ENCODE measurements at regions of chr3 and their contacts with region 1.

Region 1: GRCh38 chr3:61008998-61009380 is 242.3 kb downstream of the FHIT start:
- DNase-seq: no peak
- ATAC-seq: no peak
- H3K4me3 ChIP-seq: no peak overlapping the region
- H3K27ac ChIP-seq: no peak overlapping the region
- H3K4me1 ChIP-seq: no peaks in the 10 kb centered on the region
- H3K27me3 ChIP-seq: no peaks in the 10 kb centered on the region
- CTCF ChIP-seq: no peak
- POLR2A ChIP-seq: no peak
- RAD21 ChIP-seq: no peak

Region 2: DNA sequence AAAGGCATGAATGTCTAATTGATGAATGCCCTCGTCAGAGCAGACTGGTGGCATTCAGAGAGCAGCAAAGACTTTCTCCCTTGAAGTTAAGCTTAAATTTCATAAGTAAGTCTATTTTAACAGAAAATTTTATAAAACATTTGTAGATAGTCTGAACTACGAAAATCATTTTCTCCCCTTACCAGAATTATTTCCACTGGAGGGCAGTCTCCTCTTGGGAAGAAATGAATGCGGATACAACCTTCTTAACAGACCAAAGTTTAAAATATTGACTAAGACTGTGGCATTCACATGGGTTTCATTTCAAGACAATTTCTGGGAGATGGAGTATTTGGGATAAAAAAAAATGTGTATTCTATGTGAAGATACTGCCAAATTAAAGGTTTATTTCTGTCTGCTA is 426.7 kb before region 1 on chr3:
- CTCF ChIA-PET with region 1: no interaction called
- POLR2A ChIA-PET with region 1: no interaction called
- dilution Hi-C with region 1: no loop called
- in situ Hi-C with region 1: no loop called
- intact Hi-C with region 1: no loop called
- DNase-seq: no peak
- ATAC-seq: no peak
- H3K4me3 ChIP-seq: no peak overlapping the region
- H3K27ac ChIP-seq: no peak overlapping the region
- H3K4me1 ChIP-seq: peaks cover 2% of the 10 kb centered on the region; the same call in 1 of the 2 replicates
- H3K27me3 ChIP-seq: no peaks in the 10 kb centered on the region
- CTCF ChIP-seq: peak; percentile 18; the same call in 1 of the 2 replicates
- POLR2A ChIP-seq: no peak
- RAD21 ChIP-seq: no peak

Region 3: DNA sequence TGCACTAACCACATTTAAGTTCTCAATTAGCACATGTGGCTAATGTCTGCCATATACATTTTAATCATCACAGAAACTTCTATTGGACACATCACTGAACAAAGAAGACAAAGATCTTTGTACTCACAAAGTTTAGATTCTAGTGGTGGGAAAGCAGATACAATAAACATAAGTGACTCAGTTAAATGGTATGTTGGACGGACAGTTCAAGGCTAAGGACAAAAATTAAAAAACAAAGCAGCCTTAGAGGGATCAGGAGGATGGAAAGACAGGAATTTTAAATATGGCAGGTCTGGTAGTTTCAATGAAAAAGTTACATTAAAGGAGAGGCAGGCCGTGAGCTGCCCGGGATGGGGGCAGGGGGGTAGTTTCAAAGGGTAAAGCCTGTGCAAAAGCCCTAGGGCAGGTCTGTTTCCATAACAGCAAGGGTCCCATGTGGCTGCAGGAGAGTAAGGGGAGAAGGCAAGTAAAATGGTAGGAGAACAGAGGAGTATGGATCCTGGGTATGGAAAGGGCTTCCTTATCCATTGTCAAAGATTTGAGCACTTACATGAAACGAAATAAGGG is 21.6 kb after region 1 on chr3:
- CTCF ChIA-PET with region 1: no interaction called
- POLR2A ChIA-PET with region 1: no interaction called
- dilution Hi-C with region 1: no loop called
- in situ Hi-C with region 1: no loop called
- intact Hi-C with region 1: loop called (anchors 1 kb)
- DNase-seq: no peak
- ATAC-seq: no peak
- H3K4me3 ChIP-seq: no peak overlapping the region
- H3K27ac ChIP-seq: no peak overlapping the region
- H3K4me1 ChIP-seq: no peaks in the 10 kb centered on the region
- H3K27me3 ChIP-seq: no peaks in the 10 kb centered on the region
- CTCF ChIP-seq: no peak
- POLR2A ChIP-seq: no peak
- RAD21 ChIP-seq: no peak

Region 4: DNA sequence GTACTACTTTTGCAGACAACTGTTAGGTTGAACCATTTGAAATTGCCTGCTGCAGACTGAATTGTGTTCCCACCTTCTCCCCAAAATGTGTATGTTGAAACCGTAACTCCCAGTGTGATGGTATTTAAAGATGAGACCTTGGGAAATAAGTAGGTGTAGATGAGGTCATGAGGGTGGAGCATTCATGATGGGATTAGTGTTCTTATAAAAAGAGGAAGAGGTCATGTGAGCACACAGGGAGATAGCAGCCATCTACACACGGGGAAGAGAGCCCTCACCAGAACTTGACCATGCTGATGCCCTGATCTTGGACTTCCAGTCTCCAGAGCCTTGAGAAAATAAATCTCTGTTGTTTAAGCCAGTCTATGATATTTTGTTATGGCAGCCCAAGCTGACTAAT is 259.7 kb after region 1 on chr3:
- CTCF ChIA-PET with region 1: no interaction called
- POLR2A ChIA-PET with region 1: no interaction called
- dilution Hi-C with region 1: no loop called
- in situ Hi-C with region 1: no loop called
- intact Hi-C with region 1: no loop called
- DNase-seq: no peak
- ATAC-seq: no peak
- H3K4me3 ChIP-seq: no peak overlapping the region
- H3K27ac ChIP-seq: no peak overlapping the region
- H3K4me1 ChIP-seq: no peaks in the 10 kb centered on the region
- H3K27me3 ChIP-seq: no peaks in the 10 kb centered on the region
- CTCF ChIP-seq: no peak
- POLR2A ChIP-seq: no peak
- RAD21 ChIP-seq: no peak

Region 5: DNA sequence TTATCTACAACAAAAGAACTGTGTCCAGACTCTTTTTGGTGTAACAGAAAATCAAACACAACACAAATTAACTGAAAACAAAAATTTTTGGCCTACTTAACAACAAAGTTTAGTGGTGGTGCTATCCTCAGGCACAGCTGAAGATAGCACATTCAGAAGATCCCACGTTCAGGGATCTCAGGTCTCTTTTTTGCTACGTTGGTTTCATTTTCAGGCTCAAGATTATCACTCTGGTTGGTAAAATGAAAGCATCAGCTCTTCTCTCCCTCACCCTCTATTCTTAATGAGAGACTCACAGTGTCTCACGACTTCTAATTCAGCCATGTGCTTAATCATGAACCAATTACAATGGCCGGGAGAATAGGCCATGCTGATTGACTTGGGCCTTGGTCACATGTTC is 405.5 kb after region 1 on chr3:
- CTCF ChIA-PET with region 1: no interaction called
- POLR2A ChIA-PET with region 1: no interaction called
- dilution Hi-C with region 1: no loop called
- in situ Hi-C with region 1: no loop called
- intact Hi-C with region 1: no loop called
- DNase-seq: no peak
- ATAC-seq: no peak
- H3K4me3 ChIP-seq: no peak overlapping the region
- H3K27ac ChIP-seq: no peak overlapping the region
- H3K4me1 ChIP-seq: no peaks in the 10 kb centered on the region
- H3K27me3 ChIP-seq: no peaks in the 10 kb centered on the region
- CTCF ChIP-seq: no peak
- POLR2A ChIP-seq: no peak
- RAD21 ChIP-seq: no peak